ENCODE measurements at regions of chr17 and their contacts with region 1.

Region 1: GRCh38 chr17:29591737-29592624 is 951 bp upstream of the ANKRD13B start:
- DNase-seq: peak; percentile 98
- H3K4me3 ChIP-seq: peak overlapping the region; percentile 97
- H3K27ac ChIP-seq: peak overlapping the region; percentile 83
- H3K4me1 ChIP-seq: peaks cover 72% of the 10 kb centered on the region
- H3K27me3 ChIP-seq: no peaks in the 10 kb centered on the region
- CTCF ChIP-seq: peak; percentile 99

Region 2: DNA sequence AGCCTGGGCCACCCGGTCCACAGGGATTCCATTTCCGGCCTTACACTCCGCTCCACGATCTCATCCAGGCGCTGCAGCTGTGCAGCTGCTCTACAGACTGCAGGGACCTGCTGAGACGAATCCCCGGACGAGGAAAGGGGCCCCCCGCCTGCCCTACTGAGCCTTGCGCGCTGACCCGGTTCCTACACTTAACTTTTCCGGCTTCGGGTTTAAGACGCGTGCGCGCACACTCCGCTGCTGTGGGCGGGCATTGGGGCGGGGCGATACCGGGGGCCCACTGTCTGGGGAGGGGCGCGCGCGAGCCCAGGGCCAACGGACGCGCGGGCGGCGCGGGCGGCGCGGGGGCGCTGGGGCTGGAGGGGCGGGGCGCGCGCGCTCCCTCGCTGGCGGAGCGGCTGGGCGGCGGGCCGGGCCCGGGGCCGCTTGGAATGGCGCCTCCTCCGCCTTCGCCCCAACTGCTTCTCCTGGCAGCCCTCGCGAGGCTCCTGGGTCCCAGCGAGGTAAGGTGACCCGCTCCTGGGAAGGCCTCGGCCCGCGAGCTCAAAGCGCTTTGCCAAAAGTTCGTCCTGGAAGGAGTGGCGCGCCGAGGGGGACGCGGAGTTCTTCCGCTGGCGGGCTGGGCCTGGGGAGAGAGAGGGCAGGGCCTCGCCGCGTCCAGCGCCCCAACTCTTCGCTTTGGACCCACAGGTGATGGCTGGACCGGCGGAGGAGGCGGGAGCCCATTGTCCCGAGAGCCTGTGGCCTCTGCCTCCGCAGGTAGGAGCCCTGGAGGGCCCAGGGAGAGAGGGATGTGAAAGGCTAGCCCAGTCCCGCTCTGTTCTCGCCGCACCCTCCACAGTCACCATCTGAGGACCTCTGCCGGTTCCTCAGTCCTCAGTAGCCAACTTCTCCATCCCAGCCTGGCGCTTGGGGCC is 23.4 kb before region 1 on chr17 and contains the start of gene TP53I13:
- CTCF ChIA-PET with region 1: interaction called, 4 read pairs
- POLR2A ChIA-PET with region 1: interaction called, 17 read pairs
- intact Hi-C with region 1: loop called (anchors 1 kb)
- DNase-seq: peak; percentile 95
- H3K4me3 ChIP-seq: peak within 1 kb of the TSS; percentile 83
- H3K27ac ChIP-seq: peak within 1 kb of the TSS; percentile 88
- H3K4me1 ChIP-seq: peaks cover 18% of the 10 kb centered on the region
- H3K27me3 ChIP-seq: no peaks in the 10 kb centered on the region
- CTCF ChIP-seq: no peak
- total RNA-seq, gene TP53I13: 34.6 and 41.4 TPM in 2 replicates

Region 3: DNA sequence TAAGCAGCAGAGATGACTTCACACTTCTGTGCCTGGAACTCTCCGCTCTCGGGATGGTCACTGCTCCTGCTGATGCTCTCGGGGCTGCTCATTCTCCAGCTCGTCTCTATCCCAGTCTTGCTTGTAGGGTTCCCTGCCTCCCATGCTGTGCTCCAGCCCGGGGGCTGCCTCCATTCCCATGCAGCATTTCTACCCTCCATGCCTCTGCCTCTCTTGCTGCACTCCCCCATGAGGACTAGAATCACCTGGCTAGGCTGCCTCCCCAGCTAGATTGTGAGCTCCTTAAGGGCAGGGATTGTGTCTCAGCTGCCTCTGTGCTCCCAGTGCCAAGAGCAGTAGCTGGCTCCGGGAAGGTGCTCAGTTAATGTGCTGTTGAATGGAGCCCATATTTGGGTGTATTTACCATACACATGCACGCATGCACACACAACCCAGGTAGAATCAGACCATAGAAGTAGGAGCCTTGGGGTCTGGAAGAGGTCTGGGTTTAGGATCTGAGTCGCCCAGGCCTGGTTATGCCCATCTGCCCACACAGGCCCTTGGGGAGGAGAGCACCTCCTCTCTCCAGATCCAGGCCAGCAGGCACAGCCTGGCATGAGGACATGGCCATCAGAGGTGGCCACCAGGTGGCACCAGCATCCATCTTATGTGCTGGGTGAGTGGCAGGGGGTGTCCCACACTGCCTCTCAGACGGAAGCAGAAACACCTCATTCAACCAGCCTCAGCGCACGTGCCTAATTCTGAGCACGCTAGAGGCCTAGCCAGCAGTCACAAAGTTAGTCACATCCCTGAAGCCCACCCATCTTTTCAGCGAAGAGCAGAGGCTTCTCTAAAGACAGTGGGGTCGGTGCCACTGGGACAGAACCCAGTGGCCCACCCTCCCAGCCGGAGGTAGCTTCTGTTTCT is 11.9 kb before region 1 on chr17:
- CTCF ChIA-PET with region 1: interaction called, 3 read pairs
- POLR2A ChIA-PET with region 1: interaction called, 3 read pairs
- intact Hi-C with region 1: loop called (anchors 1 kb)
- DNase-seq: peak; percentile 91
- H3K4me3 ChIP-seq: no peak overlapping the region
- H3K27ac ChIP-seq: no peak overlapping the region
- H3K4me1 ChIP-seq: peaks cover 12% of the 10 kb centered on the region
- H3K27me3 ChIP-seq: no peaks in the 10 kb centered on the region
- CTCF ChIP-seq: peak; percentile 93

Region 4: DNA sequence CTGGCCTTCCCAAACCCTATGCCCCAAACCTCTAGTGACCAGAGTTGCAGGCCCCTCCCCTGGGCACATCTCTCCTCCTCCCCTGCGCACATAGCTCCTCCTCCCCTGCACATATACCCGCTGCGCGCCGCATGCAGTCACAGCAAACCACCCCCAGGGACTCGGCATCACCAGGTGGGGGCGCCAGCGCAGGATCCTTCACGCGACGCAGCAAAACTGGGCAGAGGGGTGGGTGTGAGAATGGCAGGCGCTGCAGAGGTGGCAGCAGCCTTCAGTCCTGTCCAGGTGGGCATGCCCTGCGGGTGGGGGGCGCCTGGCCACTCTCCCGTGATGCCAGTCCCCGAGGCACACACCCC is 25.1 kb after region 1 on chr17:
- CTCF ChIA-PET with region 1: interaction called, 16 read pairs
- POLR2A ChIA-PET with region 1: interaction called, 5 read pairs
- intact Hi-C with region 1: no loop called
- DNase-seq: peak; percentile 93
- H3K4me3 ChIP-seq: no peak overlapping the region
- H3K27ac ChIP-seq: no peak overlapping the region
- H3K4me1 ChIP-seq: peaks cover 47% of the 10 kb centered on the region
- H3K27me3 ChIP-seq: no peaks in the 10 kb centered on the region
- CTCF ChIP-seq: peak; percentile 96

Region 5: GRCh38 chr17:29682054-29682453 is 90.1 kb after region 1 on chr17:
- CTCF ChIA-PET with region 1: no interaction called
- POLR2A ChIA-PET with region 1: no interaction called
- intact Hi-C with region 1: no loop called
- DNase-seq: peak; percentile 86
- H3K4me3 ChIP-seq: no peak overlapping the region
- H3K27ac ChIP-seq: peak overlapping the region; percentile 95
- H3K4me1 ChIP-seq: peaks cover 48% of the 10 kb centered on the region
- H3K27me3 ChIP-seq: no peaks in the 10 kb centered on the region
- CTCF ChIP-seq: peak; percentile 34

Region 6: GRCh38 chr17:29753845-29754439 is 162.0 kb after region 1 on chr17:
- CTCF ChIA-PET with region 1: no interaction called
- POLR2A ChIA-PET with region 1: no interaction called
- intact Hi-C with region 1: no loop called
- DNase-seq: no peak
- H3K4me3 ChIP-seq: no peak overlapping the region
- H3K27ac ChIP-seq: no peak overlapping the region
- H3K4me1 ChIP-seq: peaks cover 1% of the 10 kb centered on the region
- H3K27me3 ChIP-seq: no peaks in the 10 kb centered on the region
- CTCF ChIP-seq: no peak